MCF 10A (cell line): ENCODE measurements at regions of chr4 and their contacts with region 1.

Region 1: DNA sequence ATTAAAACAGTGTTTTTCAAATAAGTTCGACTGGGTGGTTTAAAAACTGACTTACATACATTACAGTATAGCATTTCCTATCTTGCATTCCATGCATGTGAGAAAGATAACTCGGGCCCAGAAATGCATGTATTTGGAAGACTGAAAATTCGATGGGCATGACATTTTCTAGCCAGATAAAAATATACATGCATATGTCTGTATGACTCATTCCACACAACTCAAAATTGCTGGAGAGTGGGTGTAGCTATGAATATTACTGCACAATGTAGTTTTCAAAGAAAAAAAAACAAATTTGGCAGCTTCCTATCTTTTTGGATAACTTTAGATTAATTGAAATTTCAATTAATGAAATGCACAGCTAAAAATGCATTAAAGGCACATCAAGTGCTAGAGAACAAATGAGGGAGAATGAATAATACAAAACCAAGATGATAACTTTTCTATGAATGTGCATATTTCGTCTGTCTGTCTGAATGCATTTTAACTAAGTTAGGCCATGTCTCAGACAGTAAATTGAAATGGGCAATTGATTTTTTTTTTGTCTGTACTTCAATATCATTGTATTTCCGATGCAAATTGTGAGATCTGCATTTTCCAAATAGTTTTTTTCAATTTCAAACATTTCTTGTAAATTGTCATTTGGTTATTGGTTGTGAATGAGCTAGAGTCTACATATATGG is 54.5 kb upstream of the GABRA2 start:
- DNase-seq: peak; percentile 49
- H3K4me3 Mint-ChIP-seq: no peak overlapping the region
- H3K27ac Mint-ChIP-seq: no peak overlapping the region
- H3K4me1 Mint-ChIP-seq: peaks cover 30% of the 10 kb centered on the region
- H3K27me3 Mint-ChIP-seq: no peaks in the 10 kb centered on the region
- CTCF ChIP-seq: no peak

Region 2: DNA sequence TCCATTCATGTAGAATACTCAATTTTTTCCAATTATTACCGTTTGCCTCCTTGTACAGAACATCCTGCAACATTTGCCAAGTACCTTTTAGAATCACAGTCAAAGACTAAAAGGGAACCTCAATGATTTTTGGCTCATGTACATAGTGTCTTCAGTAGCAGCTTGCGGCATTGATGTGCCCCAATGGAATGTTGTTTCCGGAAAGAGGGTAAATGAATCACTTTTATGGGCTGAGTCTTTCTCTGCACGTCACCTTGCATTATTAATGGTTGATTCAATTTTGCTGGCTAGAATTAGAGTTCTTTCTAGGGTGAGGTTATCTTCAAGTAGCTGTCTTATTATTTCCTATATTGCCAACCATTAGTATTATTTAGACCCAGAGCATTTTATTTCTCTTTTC is 62.4 kb after region 1 on chr4:
- CTCF ChIA-PET with region 1: no interaction called
- POLR2A ChIA-PET with region 1: interaction called, 3 read pairs
- intact Hi-C with region 1: loop called (anchors 2 kb)
- DNase-seq: peak; percentile 86
- H3K4me3 Mint-ChIP-seq: no peak overlapping the region
- H3K27ac Mint-ChIP-seq: no peak overlapping the region
- H3K4me1 Mint-ChIP-seq: peaks cover 33% of the 10 kb centered on the region
- H3K27me3 Mint-ChIP-seq: no peaks in the 10 kb centered on the region
- CTCF ChIP-seq: no peak